Activated CD4-positive, alpha-beta T cell treated with anti-CD3 and anti-CD28 coated beads, Interleukin-2, amount 10 ng/mL, durations not matched to agents 24 days and 14 days (primary cell): ENCODE measurements at regions of chr1 and their contacts with region 1.

Region 1: GRCh38 chr1:228515200-228515834 is 28.1 kb downstream of the RNF187 start:
- DNase-seq: peak; percentile 80
- H3K4me3 Mint-ChIP-seq: no peak overlapping the region
- H3K27ac Mint-ChIP-seq: no peak overlapping the region
- H3K4me1 Mint-ChIP-seq: peaks cover 13% of the 10 kb centered on the region
- H3K27me3 Mint-ChIP-seq: peaks cover 51% of the 10 kb centered on the region

Region 2: GRCh38 chr1:227999056-227999930 is 516.0 kb before region 1 on chr1:
- intact Hi-C with region 1: loop called (anchors 5 kb)
- DNase-seq: peak; percentile 88
- H3K4me3 Mint-ChIP-seq: no peak overlapping the region
- H3K27ac Mint-ChIP-seq: no peak overlapping the region
- H3K4me1 Mint-ChIP-seq: no peaks in the 10 kb centered on the region
- H3K27me3 Mint-ChIP-seq: peaks cover 24% of the 10 kb centered on the region

Region 3: GRCh38 chr1:228131766-228132165 is 383.6 kb before region 1 on chr1:
- intact Hi-C with region 1: loop called (anchors 2 kb)
- DNase-seq: no peak
- H3K4me3 Mint-ChIP-seq: no peak overlapping the region
- H3K27ac Mint-ChIP-seq: no peak overlapping the region
- H3K4me1 Mint-ChIP-seq: peaks cover 8% of the 10 kb centered on the region
- H3K27me3 Mint-ChIP-seq: peaks cover 40% of the 10 kb centered on the region

Region 4: DNA sequence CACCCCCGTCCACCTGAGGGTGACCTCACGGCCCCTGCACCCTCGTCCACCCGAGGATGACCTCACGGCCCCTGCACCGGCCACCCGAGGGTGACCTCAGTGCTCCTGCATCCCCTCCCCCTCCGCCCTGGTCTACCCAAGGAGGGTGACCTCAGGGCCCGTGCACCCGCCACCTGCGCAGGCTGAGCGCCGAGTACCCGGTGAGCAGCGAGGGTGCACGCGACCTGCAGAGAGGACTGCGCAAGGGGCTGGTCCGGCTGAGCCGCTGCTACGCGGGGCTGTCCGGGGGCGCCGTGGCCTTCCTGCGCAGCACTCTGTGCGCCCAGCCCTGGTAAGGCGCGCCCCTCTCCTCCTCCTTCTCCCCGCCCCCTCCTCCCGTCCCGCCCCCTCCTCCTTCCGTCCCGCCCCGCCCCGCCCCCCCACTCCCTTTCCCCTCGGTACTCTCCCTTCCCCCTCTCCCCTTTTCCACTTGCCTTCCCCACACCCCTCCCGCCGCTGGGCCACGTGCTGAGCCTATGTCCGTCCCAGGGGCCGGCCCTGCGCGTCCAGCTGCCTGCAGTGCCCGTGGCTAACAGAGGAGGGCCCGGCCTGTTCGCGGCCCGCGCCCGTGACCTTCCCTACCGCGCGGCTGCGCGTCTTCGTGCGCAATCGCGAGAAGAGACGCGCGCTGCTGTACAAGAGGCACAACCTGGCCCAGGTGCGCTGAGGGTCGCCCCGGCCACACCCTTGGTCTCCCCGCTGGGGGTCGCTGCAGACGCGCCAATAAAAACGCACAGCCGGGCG is 137.0 kb before region 1 on chr1:
- intact Hi-C with region 1: loop called (anchors 2 kb)
- DNase-seq: peak; percentile 89
- H3K4me3 Mint-ChIP-seq: peak overlapping the region; percentile 91
- H3K27ac Mint-ChIP-seq: no peak overlapping the region
- H3K4me1 Mint-ChIP-seq: peaks cover 6% of the 10 kb centered on the region
- H3K27me3 Mint-ChIP-seq: peaks cover 34% of the 10 kb centered on the region

Region 5: DNA sequence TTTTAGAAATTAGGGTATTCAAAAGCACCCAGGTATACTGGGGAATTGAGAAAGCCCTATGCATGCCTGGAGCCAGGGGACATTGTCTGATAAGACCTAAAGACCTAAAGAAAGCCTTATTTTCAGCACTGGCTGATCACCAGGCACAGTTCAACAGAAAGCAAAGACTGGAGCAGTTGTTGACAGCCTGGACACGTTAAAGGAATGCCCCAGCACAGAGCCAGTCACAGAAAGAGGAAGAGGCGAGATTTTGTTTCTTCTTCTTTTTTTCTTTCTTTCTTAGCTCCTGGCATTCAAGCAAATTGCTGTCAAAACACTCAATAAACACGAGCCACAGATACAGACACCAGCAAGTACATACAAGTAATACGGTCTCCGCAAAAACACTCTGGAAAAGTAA is 12.3 kb after region 1 on chr1:
- intact Hi-C with region 1: no loop called
- DNase-seq: no peak
- H3K4me3 Mint-ChIP-seq: no peak overlapping the region
- H3K27ac Mint-ChIP-seq: no peak overlapping the region
- H3K4me1 Mint-ChIP-seq: no peaks in the 10 kb centered on the region
- H3K27me3 Mint-ChIP-seq: peaks cover 5% of the 10 kb centered on the region